OCI-LY7 (cell line): ENCODE measurements at regions of chr11 and their contacts with region 1.

Region 1: DNA sequence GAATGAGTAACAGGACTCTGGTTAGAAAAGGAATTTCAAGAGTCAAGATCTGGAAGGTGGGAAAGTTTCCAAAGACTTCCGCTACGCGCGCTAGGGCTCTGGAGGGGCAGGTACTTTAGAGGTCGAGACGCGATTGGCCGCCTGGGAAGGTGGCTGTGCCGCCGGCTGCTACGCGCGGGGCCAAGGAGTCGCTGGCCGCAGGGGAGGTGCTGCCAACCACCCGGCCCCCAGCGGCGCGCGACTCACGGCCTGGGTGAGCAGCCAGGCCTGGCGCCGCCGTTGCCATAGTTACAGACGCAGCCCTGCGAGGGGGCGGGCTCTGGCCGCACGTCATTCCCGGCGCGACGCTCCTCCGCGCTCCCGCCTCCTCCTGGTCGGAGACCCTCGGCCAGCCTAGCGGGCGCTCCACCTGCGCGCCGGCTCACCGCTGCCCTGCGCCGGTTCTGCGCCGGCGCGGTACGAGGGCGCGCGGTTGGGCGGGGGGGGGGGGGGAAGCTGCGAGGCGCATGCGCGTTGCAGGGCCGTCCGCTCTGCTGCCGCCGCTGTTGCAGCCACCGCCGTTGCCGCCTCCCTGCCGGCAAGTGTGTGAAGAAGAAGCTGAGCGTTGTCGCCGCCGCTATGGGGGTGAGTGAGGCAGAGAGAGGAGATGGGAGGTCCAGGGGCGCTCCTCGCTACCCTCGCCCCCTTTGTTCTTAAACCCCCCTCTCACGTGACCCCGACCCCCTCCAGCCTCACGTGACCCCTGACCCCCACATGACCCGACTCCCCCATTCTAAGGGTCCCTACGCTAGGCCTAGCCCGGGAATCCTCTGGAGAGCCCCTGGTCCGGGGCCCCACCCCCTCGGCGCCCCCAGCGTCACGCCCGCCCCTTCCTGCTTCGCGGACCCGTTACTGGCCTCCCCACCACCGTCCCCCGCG is at the start of gene NAA40:
- DNase-seq: peak; percentile 99
- H3K4me3 ChIP-seq: peak within 1 kb of the TSS; percentile 98
- H3K27ac ChIP-seq: peak within 1 kb of the TSS; percentile 84
- H3K4me1 ChIP-seq: peaks cover 24% of the 10 kb centered on the region
- CTCF ChIP-seq: no peak
- total RNA-seq, gene NAA40: 24.5 and 34.5 TPM in 2 replicates

Region 2: DNA sequence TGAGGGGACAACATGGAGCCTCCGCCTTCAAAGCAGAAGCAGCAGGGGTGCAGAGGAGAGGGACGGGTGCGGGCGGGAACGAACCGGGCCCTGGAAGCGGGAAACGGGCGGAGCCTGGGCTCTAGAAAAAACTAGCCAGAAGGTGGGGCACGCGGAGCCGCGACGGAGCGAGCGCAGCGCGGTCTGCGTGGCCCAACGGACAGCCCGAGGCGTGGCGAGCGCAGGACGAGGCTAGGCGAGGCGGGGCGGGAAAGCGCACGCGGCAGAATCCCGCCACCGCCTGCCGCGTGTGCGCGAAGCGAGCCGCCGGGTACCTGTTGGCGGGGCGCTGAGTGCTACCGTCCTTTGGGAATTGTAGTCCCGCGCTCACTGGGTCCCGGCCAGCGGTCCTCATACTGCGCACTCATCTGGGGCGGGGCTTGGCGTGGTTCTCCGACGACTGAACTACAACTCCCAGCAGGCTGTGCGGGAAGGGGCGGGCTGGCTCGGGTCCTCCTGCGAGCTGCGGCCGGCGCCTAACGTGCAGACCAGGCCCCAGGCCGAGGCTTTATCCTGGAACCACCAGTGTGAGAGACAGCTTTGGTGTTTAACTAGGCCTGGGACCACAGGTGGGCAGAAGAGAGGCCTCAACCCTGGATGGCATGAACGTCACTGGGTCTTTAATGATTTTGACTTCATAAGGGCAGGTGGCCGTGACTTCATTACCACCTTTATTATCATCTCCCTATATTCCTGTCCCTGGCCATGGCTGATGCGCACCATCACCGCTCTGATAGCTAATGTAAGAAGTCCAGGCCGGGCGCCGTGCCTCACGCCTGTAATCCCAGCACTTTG is 267.2 kb before region 1 on chr11 and contains the start of gene ATL3:
- CTCF ChIA-PET with region 1: no interaction called
- POLR2A ChIA-PET with region 1: interaction called, 6 read pairs
- intact Hi-C with region 1: loop called (anchors 5 kb)
- DNase-seq: peak; percentile 98
- H3K4me3 ChIP-seq: peak within 1 kb of the TSS; percentile 76
- H3K27ac ChIP-seq: peak within 1 kb of the TSS; percentile 48
- H3K4me1 ChIP-seq: peaks cover 27% of the 10 kb centered on the region
- CTCF ChIP-seq: no peak
- total RNA-seq, gene ATL3: 15.7 and 23.2 TPM in 2 replicates

Region 3: GRCh38 chr11:63768237-63769043 is 170.3 kb before region 1 on chr11 and contains the start of gene ZFTA:
- CTCF ChIA-PET with region 1: no interaction called
- POLR2A ChIA-PET with region 1: no interaction called
- intact Hi-C with region 1: loop called (anchors 2 kb)
- DNase-seq: peak; percentile 84
- H3K4me3 ChIP-seq: peak within 1 kb of the TSS; percentile 91
- H3K27ac ChIP-seq: peak within 1 kb of the TSS; percentile 52
- H3K4me1 ChIP-seq: peaks cover 20% of the 10 kb centered on the region
- CTCF ChIP-seq: peak; percentile 52
- total RNA-seq, gene ZFTA: 6.8 and 10.3 TPM in 2 replicates

Region 4: DNA sequence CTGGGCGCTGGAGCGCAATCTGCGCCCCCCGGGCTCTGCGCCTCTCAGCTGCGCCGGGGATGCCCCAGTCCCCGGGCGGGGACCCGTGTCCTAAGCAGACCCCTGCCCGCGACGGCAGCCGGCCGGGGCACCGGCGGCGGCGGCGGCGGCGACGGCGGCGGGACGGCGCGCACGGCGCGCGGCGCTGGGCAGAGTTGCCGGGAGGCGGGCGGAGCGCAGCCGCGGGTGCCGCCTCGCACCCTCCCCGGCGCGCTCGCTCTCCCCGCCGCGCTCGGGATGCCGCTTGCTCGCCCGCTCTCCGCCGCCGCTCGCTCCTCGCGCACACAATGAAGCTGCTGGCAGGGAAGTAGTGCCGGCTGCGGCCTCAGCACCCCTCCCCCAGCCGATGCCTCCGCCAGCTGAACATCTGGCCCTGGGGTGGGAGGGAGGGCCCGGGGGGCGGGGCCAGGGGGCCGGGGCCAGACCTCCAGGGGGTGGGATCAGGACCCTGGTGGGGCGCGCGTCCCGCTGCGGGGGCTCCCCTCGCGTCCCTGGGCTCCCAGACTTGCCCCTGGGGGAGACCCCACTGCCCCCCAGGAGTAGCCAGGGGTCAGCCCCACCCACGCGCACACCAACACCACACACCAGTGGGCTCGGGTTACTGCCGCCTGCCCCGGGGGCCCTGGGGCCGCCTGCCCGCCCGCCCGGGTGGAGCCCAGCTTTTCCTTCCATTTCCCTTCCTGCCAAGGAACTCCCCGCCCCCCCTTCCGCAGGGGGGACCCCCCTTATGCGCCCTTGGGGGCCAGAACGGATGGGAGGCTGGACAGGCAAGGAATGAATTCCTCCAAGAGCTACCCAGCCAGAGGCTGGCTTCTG is 21.7 kb before region 1 on chr11 and contains the start of gene RCOR2:
- CTCF ChIA-PET with region 1: no interaction called
- POLR2A ChIA-PET with region 1: interaction called, 4 read pairs
- intact Hi-C with region 1: loop called (anchors 2 kb)
- DNase-seq: peak; percentile 91
- H3K4me3 ChIP-seq: peak within 1 kb of the TSS; percentile 71
- H3K27ac ChIP-seq: peak within 1 kb of the TSS; percentile 29
- H3K4me1 ChIP-seq: peaks cover 32% of the 10 kb centered on the region
- CTCF ChIP-seq: no peak
- total RNA-seq, gene RCOR2: 2.1 and 2.4 TPM in 2 replicates